Endothelial cell of umbilical vein (primary cell): ENCODE measurements at regions of chr7 and their contacts with region 1.

Region 1: DNA sequence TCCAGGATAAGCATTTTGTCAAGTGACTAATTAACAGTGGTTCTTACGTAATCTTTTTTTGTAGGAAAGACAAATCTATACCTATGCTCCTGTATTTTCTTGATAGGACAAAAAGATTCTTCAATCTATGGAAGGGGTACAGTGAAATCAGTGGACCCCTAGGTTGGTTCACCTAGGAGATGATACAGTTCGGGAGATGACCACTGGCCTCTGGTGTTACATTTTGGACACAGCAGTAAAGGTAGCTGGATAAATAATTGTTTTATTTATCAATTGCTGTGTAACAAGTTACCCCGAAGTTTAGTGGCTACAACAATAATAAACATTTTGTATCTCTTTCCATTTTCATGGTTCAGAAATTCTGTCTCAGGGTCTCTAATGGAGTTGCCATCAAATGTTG is 288.2 kb upstream of the MAGI2 start:
- DNase-seq: peak; percentile 32
- H3K4me3 ChIP-seq: no peak overlapping the region
- H3K27ac ChIP-seq: no peak overlapping the region
- H3K4me1 ChIP-seq: no peaks in the 10 kb centered on the region
- H3K27me3 ChIP-seq: no peaks in the 10 kb centered on the region
- CTCF ChIP-seq: peak in 1 of 2 donors; percentile 33
- POLR2A ChIP-seq: no peak

Region 2: GRCh38 chr7:79272066-79272669 is 469.5 kb before region 1 on chr7:
- CTCF ChIA-PET with region 1: interaction called, 5 read pairs
- POLR2A ChIA-PET with region 1: no interaction called
- dilution Hi-C with region 1: no loop called
- intact Hi-C with region 1: loop called (anchors 1 kb)
- DNase-seq: peak; percentile 55
- H3K4me3 ChIP-seq: no peak overlapping the region
- H3K27ac ChIP-seq: no peak overlapping the region
- H3K4me1 ChIP-seq: peaks cover 7% of the 10 kb centered on the region
- H3K27me3 ChIP-seq: no peaks in the 10 kb centered on the region
- CTCF ChIP-seq: peak; percentile 41 to 45
- POLR2A ChIP-seq: no peak

Region 3: DNA sequence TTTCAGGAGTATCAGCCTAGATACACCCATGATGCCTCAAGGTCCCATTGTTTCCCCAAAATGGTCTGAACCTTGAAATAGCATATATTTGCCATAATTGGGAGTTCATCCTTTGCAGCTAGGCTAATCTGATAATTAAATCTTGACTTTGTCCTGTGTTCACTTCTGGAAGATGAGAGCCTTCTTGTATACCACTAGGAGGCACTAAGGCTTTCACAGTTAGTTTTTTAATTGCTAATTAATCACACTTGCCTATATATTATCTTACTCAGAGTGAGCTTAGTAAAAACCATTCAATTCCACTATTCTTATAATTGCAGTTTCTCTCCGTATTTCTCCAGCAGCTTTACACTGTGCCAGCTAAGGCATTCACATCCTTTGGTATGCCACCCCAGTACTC is 239.5 kb before region 1 on chr7:
- CTCF ChIA-PET with region 1: interaction called, 5 read pairs
- POLR2A ChIA-PET with region 1: no interaction called
- dilution Hi-C with region 1: no loop called
- intact Hi-C with region 1: loop called (anchors 1 kb)
- DNase-seq: peak; percentile 16
- H3K4me3 ChIP-seq: no peak overlapping the region
- H3K27ac ChIP-seq: no peak overlapping the region
- H3K4me1 ChIP-seq: no peaks in the 10 kb centered on the region
- H3K27me3 ChIP-seq: no peaks in the 10 kb centered on the region
- CTCF ChIP-seq: peak; percentile 28 to 39
- POLR2A ChIP-seq: no peak

Region 4: DNA sequence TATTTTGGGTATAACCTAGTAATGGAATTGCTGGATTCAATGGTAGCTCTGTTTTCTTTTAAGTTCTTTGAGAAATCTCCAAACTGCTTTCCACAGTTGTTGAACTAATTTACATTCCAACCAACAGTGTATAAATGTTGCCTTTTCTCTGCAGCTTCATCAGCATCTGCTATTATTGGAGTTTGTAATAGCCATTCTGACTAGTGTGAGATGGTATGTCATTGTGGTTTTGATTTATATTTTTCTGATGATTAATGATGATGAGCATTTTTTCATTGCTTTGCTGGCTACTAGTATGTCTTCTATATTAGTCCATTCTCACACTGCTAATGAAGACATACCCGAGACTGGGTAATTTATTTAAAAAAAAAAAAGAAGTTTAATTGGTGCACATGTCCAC is 39.6 kb before region 1 on chr7:
- CTCF ChIA-PET with region 1: no interaction called
- POLR2A ChIA-PET with region 1: no interaction called
- dilution Hi-C with region 1: no loop called
- intact Hi-C with region 1: no loop called
- DNase-seq: no peak
- H3K4me3 ChIP-seq: no peak overlapping the region
- H3K27ac ChIP-seq: no peak overlapping the region
- H3K4me1 ChIP-seq: no peaks in the 10 kb centered on the region
- H3K27me3 ChIP-seq: no peaks in the 10 kb centered on the region
- CTCF ChIP-seq: no peak
- POLR2A ChIP-seq: no peak